OCI-LY7 (cell line): ENCODE measurements at regions of chr9 and their contacts with region 1.

Region 1: GRCh38 chr9:22693156-22693555 is 246.5 kb downstream of the DMRTA1 start:
- DNase-seq: no peak
- H3K4me3 ChIP-seq: no peak overlapping the region
- H3K27ac ChIP-seq: no peak overlapping the region
- H3K4me1 ChIP-seq: peaks cover 5% of the 10 kb centered on the region
- CTCF ChIP-seq: no peak

Region 2: DNA sequence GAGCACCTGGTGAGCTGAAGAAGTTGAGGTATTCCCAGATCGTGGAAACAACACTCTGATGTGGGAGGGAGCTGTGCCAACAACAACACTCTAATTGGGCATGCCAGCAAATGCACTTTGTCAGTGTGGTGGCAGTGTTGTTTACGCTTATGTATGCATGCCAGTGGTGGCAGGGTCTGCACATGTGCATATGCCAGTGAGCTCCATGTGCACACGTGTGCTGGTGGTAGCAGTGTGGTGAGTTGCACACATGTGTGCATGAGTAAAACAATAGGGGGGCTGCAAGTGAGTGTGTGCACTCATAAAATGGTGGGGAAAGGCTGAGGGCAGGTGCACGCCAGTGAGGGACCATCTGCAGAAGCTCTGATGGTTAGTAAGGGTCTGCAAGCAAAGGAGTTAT is 112.4 kb before region 1 on chr9:
- CTCF ChIA-PET with region 1: no interaction called
- POLR2A ChIA-PET with region 1: no interaction called
- intact Hi-C with region 1: no loop called
- DNase-seq: no peak
- H3K4me3 ChIP-seq: no peak overlapping the region
- H3K27ac ChIP-seq: no peak overlapping the region
- H3K4me1 ChIP-seq: no peaks in the 10 kb centered on the region
- CTCF ChIP-seq: no peak

Region 3: GRCh38 chr9:22740781-22741180 is 47.6 kb after region 1 on chr9:
- CTCF ChIA-PET with region 1: no interaction called
- POLR2A ChIA-PET with region 1: no interaction called
- intact Hi-C with region 1: loop called (anchors 10 kb)
- DNase-seq: no peak
- H3K4me3 ChIP-seq: no peak overlapping the region
- H3K27ac ChIP-seq: no peak overlapping the region
- H3K4me1 ChIP-seq: no peaks in the 10 kb centered on the region
- CTCF ChIP-seq: no peak